ENCODE measurements at regions of chr7 and their contacts with region 1.

Region 1: DNA sequence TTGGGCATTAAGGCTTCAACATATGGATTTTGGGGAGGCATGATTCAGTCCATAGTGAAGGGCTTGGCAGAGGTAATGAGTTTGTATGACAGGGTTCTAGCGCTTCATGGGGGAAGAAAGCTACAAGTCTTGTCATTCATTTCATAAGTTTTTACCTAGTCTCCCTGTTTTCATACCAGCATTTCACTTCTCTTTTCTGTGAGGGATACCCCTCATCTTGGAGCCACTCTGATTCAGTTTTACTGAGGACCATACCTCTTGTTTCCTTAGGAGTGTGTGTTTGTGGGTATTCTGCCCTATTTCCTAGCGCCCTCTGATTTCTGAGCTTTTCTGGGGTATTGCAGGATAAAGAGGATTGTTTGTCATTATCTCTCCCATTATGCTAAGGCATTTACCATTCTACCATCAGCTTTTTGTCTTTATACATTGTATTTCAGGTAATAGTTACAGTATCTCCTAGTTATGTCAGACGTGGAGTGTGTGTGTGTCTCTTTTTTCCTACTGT is 6.8 kb downstream of the RSBN1L start:
- DNase-seq: no peak
- ATAC-seq: no peak
- H3K4me3 ChIP-seq: no peak overlapping the region
- H3K4me3 Mint-ChIP-seq: no peak overlapping the region
- H3K27ac ChIP-seq: no peak overlapping the region
- H3K27ac Mint-ChIP-seq: no peak overlapping the region
- H3K4me1 ChIP-seq: peaks cover 27% of the 10 kb centered on the region
- H3K4me1 Mint-ChIP-seq: peaks cover 62% of the 10 kb centered on the region
- H3K27me3 ChIP-seq: no peaks in the 10 kb centered on the region
- H3K27me3 Mint-ChIP-seq: no peaks in the 10 kb centered on the region
- CTCF ChIP-seq: no peak

Region 2: DNA sequence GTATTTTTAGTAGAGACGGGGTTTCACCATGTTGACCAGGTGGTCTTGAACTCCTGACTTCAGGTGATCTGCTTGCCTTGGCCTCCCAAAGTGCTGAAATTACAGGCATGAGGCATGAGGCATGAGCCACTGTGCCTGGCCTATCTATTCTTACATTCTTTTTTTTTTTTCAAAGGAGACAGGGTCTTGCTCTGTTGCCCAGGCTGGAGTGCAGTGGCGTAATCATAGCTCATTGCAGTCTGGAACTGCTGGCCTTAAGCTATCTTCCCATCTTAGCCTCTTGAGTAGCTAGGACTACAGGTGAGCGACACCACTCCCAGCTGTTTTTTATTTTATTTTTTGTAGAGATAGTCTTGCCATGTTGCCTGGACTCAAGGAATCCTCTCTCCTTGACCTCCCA is 13.8 kb after region 1 on chr7:
- CTCF ChIA-PET with region 1: no interaction called
- POLR2A ChIA-PET with region 1: no interaction called
- intact Hi-C with region 1: loop called in 1 of 2 experiments (anchors 1 kb)
- DNase-seq: no peak
- ATAC-seq: no peak
- H3K4me3 ChIP-seq: no peak overlapping the region
- H3K4me3 Mint-ChIP-seq: no peak overlapping the region
- H3K27ac ChIP-seq: no peak overlapping the region
- H3K27ac Mint-ChIP-seq: no peak overlapping the region
- H3K4me1 ChIP-seq: peaks cover 33% of the 10 kb centered on the region
- H3K4me1 Mint-ChIP-seq: peaks cover 66% of the 10 kb centered on the region
- H3K27me3 ChIP-seq: no peaks in the 10 kb centered on the region
- H3K27me3 Mint-ChIP-seq: no peaks in the 10 kb centered on the region
- CTCF ChIP-seq: no peak

Region 3: GRCh38 chr7:78472519-78472918 is 769.5 kb after region 1 on chr7:
- CTCF ChIA-PET with region 1: no interaction called
- POLR2A ChIA-PET with region 1: no interaction called
- intact Hi-C with region 1: no loop called
- DNase-seq: no peak
- ATAC-seq: no peak
- H3K4me3 ChIP-seq: no peak overlapping the region
- H3K4me3 Mint-ChIP-seq: no peak overlapping the region
- H3K27ac ChIP-seq: no peak overlapping the region
- H3K27ac Mint-ChIP-seq: no peak overlapping the region
- H3K4me1 ChIP-seq: no peaks in the 10 kb centered on the region
- H3K4me1 Mint-ChIP-seq: no peaks in the 10 kb centered on the region
- H3K27me3 ChIP-seq: no peaks in the 10 kb centered on the region
- H3K27me3 Mint-ChIP-seq: peaks cover 5% of the 10 kb centered on the region
- CTCF ChIP-seq: no peak